HEK293 (cell line): ENCODE measurements at regions of chr4 and their contacts with region 1.

Region 1: DNA sequence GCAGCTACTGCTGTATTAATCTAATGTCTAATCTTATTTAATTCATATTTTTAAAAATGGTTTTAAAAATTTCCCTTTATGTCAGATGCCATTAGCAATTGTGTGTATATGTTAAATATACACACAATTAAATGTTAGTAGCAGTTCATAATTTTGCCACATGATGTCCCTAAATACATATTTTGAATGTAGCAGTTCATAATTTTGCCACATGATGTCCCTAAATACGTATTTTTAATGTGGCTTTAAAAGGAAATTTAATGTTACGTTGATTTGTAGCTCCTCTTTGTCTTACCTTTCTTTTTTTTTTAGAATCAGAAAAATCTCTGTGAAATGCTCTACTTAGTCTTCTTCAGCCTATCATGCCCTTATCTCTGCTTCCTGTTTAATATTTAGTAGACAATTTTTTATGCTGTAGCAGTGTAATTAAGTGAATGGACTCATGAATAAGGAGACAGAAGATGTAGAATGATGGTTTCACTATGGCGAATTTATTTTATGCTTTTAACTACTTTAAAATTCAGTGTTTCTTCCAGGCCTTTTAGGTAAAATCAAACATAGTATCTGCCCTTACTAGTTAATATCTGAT is 26.1 kb downstream of the RBM46 start:
- H3K4me3 ChIP-seq: no peak overlapping the region
- H3K27ac ChIP-seq: no peak overlapping the region
- H3K4me1 ChIP-seq: no peaks in the 10 kb centered on the region
- CTCF ChIP-seq: peak; percentile 36; the same call in 1 of the 2 replicates

Region 2: GRCh38 chr4:154928640-154929257 is 121.6 kb after region 1 on chr4:
- CTCF ChIA-PET with region 1: interaction called, 13 read pairs
- POLR2A ChIA-PET with region 1: no interaction called
- H3K4me3 ChIP-seq: no peak overlapping the region
- H3K27ac ChIP-seq: no peak overlapping the region
- H3K4me1 ChIP-seq: no peaks in the 10 kb centered on the region
- CTCF ChIP-seq: no peak